Posterior cingulate gyrus (tissue), 11 donors: ENCODE measurements at regions of chr17 and their contacts with region 1.

Region 1: GRCh38 chr17:15257258-15257788 is 7.8 kb downstream of the PMP22 start:
- DNase-seq: peak; percentile 84 to 98 (median 90)

Region 2: GRCh38 chr17:15233022-15233805 is 24.1 kb before region 1 on chr17:
- intact Hi-C with region 1: loop called (anchors 2 kb)
- DNase-seq: peak in 3 of 10 donors; percentile 24 to 89 (median 44)

Region 3: DNA sequence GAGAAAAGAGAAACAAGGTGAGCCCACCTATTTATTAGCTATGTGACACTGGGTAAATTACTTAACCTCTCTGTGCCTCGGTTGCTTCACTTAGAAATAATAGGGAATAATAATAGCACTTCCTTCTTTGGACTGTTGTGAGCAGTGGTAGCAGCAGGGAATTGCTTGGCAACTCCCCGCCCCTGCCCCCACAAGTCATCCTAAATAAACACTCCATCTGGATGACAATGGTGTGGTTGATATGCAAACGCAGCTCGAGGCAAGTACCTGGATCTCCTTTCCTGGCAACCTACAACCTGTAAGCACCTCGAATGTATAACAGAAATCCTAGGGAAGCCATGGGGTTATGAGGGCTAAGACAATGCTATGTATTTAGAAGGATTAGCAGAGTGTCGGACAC is 75.0 kb after region 1 on chr17:
- intact Hi-C with region 1: no loop called
- DNase-seq: no peak

Region 4: GRCh38 chr17:15377616-15378015 is 120.3 kb after region 1 on chr17:
- intact Hi-C with region 1: loop called (anchors 10 kb)
- DNase-seq: peak in 3 of 10 donors; percentile 7 to 51 (median 51)

Region 5: GRCh38 chr17:15502369-15503112 is 245.2 kb after region 1 on chr17:
- intact Hi-C with region 1: loop called (anchors 1 kb)
- DNase-seq: peak; percentile 78 to 98 (median 87)